Calu3 (cell line): ENCODE measurements at regions of chr4 and their contacts with region 1.

Region 1: DNA sequence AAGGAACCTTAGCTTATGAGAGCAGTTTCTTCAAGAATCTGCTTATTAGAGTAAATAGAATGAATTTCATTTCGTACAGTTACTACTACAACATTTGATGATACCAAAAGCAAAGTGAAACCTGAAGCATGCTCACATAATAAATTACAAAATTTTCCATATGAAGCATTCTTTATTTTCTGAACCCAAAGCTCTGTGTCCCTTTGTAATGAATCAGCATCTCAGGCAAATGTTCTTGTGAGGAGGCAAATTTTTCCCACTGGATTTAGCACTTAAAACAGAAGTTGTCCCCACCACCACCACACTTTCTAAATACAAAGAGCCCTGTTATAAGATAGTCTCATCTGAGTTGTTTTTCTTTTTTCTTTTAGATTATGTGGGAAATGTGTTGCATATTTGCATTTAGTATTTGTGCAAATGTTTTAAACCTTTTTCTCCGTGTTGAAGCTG is 70.7 kb upstream of the NFKB1 start:
- DNase-seq: no peak
- H3K4me3 Mint-ChIP-seq: peak overlapping the region; percentile 66
- H3K27ac Mint-ChIP-seq: no peak overlapping the region
- H3K4me1 Mint-ChIP-seq: peaks cover 16% of the 10 kb centered on the region
- H3K27me3 Mint-ChIP-seq: no peaks in the 10 kb centered on the region
- CTCF ChIP-seq: no peak

Region 2: GRCh38 chr4:102344954-102345794 is 85.3 kb before region 1 on chr4 and contains the start of gene SLC39A8:
- CTCF ChIA-PET with region 1: interaction called, 7 read pairs
- intact Hi-C with region 1: loop called (anchors 1 kb)
- DNase-seq: peak; percentile 87
- H3K4me3 Mint-ChIP-seq: peak within 1 kb of the TSS; percentile 79
- H3K27ac Mint-ChIP-seq: peak within 1 kb of the TSS; percentile 53
- H3K4me1 Mint-ChIP-seq: peaks cover 11% of the 10 kb centered on the region
- H3K27me3 Mint-ChIP-seq: no peaks in the 10 kb centered on the region
- CTCF ChIP-seq: peak; percentile 65
- total RNA-seq, gene SLC39A8: 13.3 and 30.8 TPM in 2 replicates

Region 3: GRCh38 chr4:102843273-102843672 is 412.8 kb after region 1 on chr4:
- CTCF ChIA-PET with region 1: no interaction called
- intact Hi-C with region 1: no loop called
- DNase-seq: no peak
- H3K4me3 Mint-ChIP-seq: no peak overlapping the region
- H3K27ac Mint-ChIP-seq: no peak overlapping the region
- H3K4me1 Mint-ChIP-seq: no peaks in the 10 kb centered on the region
- H3K27me3 Mint-ChIP-seq: no peaks in the 10 kb centered on the region
- CTCF ChIP-seq: no peak

Region 4: GRCh38 chr4:103008875-103009729 is 578.6 kb after region 1 on chr4:
- CTCF ChIA-PET with region 1: no interaction called
- intact Hi-C with region 1: loop called (anchors 5 kb)
- DNase-seq: peak; percentile 25
- H3K4me3 Mint-ChIP-seq: no peak overlapping the region
- H3K27ac Mint-ChIP-seq: no peak overlapping the region
- H3K4me1 Mint-ChIP-seq: peaks cover 13% of the 10 kb centered on the region
- H3K27me3 Mint-ChIP-seq: no peaks in the 10 kb centered on the region
- CTCF ChIP-seq: peak; percentile 23

Region 5: DNA sequence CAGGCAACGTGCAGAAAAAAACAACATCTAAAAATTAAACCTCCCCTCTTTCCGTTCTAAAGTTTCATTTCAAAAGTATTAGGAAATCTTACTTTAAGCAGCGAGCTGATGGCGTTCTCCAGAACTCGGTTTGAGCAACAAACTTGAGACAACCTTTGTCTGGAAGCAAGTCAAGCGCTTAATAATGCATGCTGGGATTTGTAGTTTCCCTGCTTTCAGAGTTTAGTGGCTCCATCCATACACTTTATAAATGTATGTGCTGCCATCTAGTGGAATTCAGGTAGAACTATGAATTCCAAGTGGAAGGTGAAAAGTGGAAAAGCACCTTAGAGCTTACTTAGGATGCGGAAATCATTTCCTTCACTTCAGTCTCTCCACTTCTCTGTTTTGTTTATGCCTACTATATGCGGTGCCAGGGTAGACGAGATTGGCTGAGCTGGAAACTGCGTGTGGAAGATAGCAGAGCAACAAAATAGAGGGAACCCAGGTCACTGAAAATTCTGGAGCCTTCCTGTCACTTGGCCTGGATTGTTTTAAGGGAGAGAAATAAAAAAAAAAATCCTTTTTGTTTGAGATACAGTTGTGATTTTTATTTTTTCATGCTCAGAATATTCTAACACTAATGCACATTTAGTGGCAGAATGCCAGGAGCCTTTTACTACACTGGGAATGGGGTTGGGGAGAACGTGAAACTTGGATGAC is 669.4 kb after region 1 on chr4 and contains the start of gene BDH2:
- CTCF ChIA-PET with region 1: no interaction called
- intact Hi-C with region 1: loop called (anchors 5 kb)
- DNase-seq: peak; percentile 11
- H3K4me3 Mint-ChIP-seq: peak within 1 kb of the TSS; percentile 39
- H3K27ac Mint-ChIP-seq: no peak within 1 kb of the TSS
- H3K4me1 Mint-ChIP-seq: peaks cover 14% of the 10 kb centered on the region
- H3K27me3 Mint-ChIP-seq: no peaks in the 10 kb centered on the region
- CTCF ChIP-seq: peak; percentile 21
- total RNA-seq, gene BDH2: 8.1 and 15.2 TPM in 2 replicates